GM12878 (cell line): ENCODE measurements at regions of chr3 and their contacts with region 1.

Region 1: DNA sequence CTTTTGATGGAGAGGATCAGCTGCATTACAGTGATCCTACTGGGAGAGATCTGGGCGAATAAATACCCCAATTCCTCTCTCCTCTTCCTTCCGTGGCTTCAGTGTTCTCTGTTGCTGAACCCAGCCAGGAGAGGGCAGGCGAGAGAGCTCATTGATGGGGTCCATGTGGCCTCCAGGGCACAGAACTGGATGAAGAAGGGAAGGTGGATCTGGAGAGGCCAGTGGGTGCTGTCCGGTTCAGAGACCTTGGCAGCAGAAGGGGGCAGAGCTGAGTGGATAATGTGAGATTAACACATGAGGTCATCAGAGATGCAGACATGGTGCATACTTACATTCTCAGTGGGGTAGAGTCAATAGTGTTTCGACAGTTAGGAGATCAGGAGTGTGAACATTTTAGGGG is 193.6 kb downstream of the CLSTN2 start:
- DNase-seq: no peak
- ATAC-seq: peak; percentile 95
- H3K4me3 ChIP-seq: no peak overlapping the region
- H3K27ac ChIP-seq: no peak overlapping the region
- H3K4me1 ChIP-seq: no peaks in the 10 kb centered on the region
- H3K27me3 ChIP-seq: peaks cover 0 to 2% of the 10 kb centered on the region in 2 experiments; a peak in 2 of 4 replicates
- CTCF ChIP-seq: peak; percentile 71 to 84 (median 72)
- EP300 ChIP-seq: no peak
- POLR2A ChIP-seq: no peak
- RAD21 ChIP-seq: peak; percentile 85

Region 2: GRCh38 chr3:139944256-139944910 is 184.2 kb before region 1 on chr3:
- CTCF ChIA-PET with region 1: no interaction called
- POLR2A ChIA-PET with region 1: no interaction called
- RAD21 ChIA-PET with region 1: no interaction called
- SMC1A ChIA-PET with region 1: no interaction called
- in situ Hi-C with region 1: no loop called
- intact Hi-C with region 1: no loop called
- DNase-seq: no peak
- ATAC-seq: no peak
- H3K4me3 ChIP-seq: no peak overlapping the region
- H3K27ac ChIP-seq: no peak overlapping the region
- H3K4me1 ChIP-seq: no peaks in the 10 kb centered on the region
- H3K27me3 ChIP-seq: peaks cover 0 to 1% of the 10 kb centered on the region in 2 experiments; a peak in 1 of 4 replicates
- CTCF ChIP-seq: no peak
- EP300 ChIP-seq: no peak
- POLR2A ChIP-seq: no peak
- RAD21 ChIP-seq: no peak

Region 3: DNA sequence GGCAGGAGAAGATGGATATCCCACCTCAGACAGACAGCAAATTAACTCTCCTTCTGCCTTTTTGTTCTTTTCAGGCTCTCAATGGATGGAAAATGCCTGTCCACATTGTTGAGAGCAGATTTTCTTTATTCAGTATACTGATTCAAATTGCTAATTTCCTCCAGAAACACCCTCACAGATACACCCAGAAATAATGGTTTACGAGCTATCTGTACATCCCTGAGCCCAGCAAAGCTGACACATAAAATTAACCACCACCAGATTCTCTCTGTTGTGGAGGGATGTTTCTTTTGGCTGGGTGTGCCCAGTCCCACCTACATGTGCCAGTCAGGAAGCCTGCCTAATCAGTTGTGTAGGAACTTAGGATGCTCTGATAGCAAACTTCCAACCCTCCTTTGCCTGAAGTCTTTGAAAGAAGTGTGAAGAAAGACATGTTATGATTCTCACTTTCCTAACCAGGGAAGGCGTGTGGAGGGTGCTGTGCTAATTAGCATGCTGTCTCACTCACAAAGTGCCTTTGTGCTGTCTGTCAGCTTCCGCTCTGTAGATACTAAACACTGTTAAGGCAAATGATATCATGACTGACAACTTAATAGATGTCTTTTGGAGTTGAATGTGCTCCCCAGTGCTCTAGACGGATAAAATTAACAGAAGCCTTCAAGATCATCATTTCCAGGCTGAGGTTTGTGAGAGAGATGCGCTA is 14.9 kb after region 1 on chr3:
- CTCF ChIA-PET with region 1: interaction called, 15 read pairs
- POLR2A ChIA-PET with region 1: interaction called, 3 read pairs
- RAD21 ChIA-PET with region 1: no interaction called
- SMC1A ChIA-PET with region 1: interaction called, 6 read pairs
- in situ Hi-C with region 1: no loop called
- intact Hi-C with region 1: no loop called
- DNase-seq: no peak
- ATAC-seq: no peak
- H3K4me3 ChIP-seq: no peak overlapping the region
- H3K27ac ChIP-seq: no peak overlapping the region
- H3K4me1 ChIP-seq: no peaks in the 10 kb centered on the region
- H3K27me3 ChIP-seq: no peaks in the 10 kb centered on the region
- CTCF ChIP-seq: no peak
- EP300 ChIP-seq: no peak
- POLR2A ChIP-seq: no peak
- RAD21 ChIP-seq: no peak

Region 4: GRCh38 chr3:140170612-140171011 is 42.0 kb after region 1 on chr3:
- CTCF ChIA-PET with region 1: interaction called, 6 read pairs
- POLR2A ChIA-PET with region 1: no interaction called
- RAD21 ChIA-PET with region 1: interaction called, 4 read pairs
- SMC1A ChIA-PET with region 1: interaction called, 12 read pairs
- in situ Hi-C with region 1: no loop called
- intact Hi-C with region 1: no loop called
- DNase-seq: peak; percentile 97
- ATAC-seq: peak; percentile 99
- H3K4me3 ChIP-seq: no peak overlapping the region
- H3K27ac ChIP-seq: peak overlapping the region; percentile 55
- H3K4me1 ChIP-seq: peaks cover 11% of the 10 kb centered on the region
- H3K27me3 ChIP-seq: no peaks in the 10 kb centered on the region
- CTCF ChIP-seq: no peak
- EP300 ChIP-seq: no peak
- POLR2A ChIP-seq: no peak
- RAD21 ChIP-seq: no peak

Region 5: GRCh38 chr3:140198242-140198641 is 69.6 kb after region 1 on chr3:
- CTCF ChIA-PET with region 1: interaction called, 26 read pairs
- POLR2A ChIA-PET with region 1: no interaction called
- RAD21 ChIA-PET with region 1: no interaction called
- SMC1A ChIA-PET with region 1: interaction called, 10 read pairs
- in situ Hi-C with region 1: no loop called
- intact Hi-C with region 1: no loop called
- DNase-seq: no peak
- ATAC-seq: no peak
- H3K4me3 ChIP-seq: no peak overlapping the region
- H3K27ac ChIP-seq: no peak overlapping the region
- H3K4me1 ChIP-seq: no peaks in the 10 kb centered on the region
- H3K27me3 ChIP-seq: no peaks in the 10 kb centered on the region
- CTCF ChIP-seq: no peak
- EP300 ChIP-seq: no peak
- POLR2A ChIP-seq: no peak
- RAD21 ChIP-seq: no peak

Region 6: DNA sequence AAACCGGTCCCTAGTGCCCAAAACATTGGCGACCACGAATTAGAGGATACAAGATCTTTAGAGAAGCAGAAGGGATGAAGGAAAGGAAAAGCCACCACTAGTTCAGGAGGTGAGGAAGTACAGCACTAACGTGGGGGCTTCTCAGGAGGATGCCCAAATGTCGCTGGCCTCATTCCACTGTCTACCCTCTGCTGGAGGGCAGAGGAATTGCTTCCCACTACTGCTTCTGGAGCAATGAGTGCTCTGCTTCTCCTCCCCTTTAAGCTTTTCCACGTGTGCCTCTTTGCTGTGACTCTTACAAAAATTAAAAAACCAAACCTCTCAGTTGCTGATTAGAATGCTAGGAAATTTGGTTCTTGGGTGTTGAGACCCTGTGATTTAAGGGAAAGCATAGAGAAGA is 87.6 kb after region 1 on chr3:
- CTCF ChIA-PET with region 1: interaction called, 72 read pairs
- POLR2A ChIA-PET with region 1: no interaction called
- RAD21 ChIA-PET with region 1: interaction called, 41 read pairs
- SMC1A ChIA-PET with region 1: interaction called, 40 read pairs
- in situ Hi-C with region 1: loop called (anchors 5 kb)
- intact Hi-C with region 1: loop called (anchors 2 kb)
- DNase-seq: no peak
- ATAC-seq: peak; percentile 86
- H3K4me3 ChIP-seq: no peak overlapping the region
- H3K27ac ChIP-seq: no peak overlapping the region
- H3K4me1 ChIP-seq: no peaks in the 10 kb centered on the region
- H3K27me3 ChIP-seq: no peaks in the 10 kb centered on the region; a peak in 1 of 4 replicates
- CTCF ChIP-seq: peak; percentile 34 to 73 (median 65)
- EP300 ChIP-seq: no peak
- POLR2A ChIP-seq: no peak
- RAD21 ChIP-seq: peak; percentile 46

Region 7: DNA sequence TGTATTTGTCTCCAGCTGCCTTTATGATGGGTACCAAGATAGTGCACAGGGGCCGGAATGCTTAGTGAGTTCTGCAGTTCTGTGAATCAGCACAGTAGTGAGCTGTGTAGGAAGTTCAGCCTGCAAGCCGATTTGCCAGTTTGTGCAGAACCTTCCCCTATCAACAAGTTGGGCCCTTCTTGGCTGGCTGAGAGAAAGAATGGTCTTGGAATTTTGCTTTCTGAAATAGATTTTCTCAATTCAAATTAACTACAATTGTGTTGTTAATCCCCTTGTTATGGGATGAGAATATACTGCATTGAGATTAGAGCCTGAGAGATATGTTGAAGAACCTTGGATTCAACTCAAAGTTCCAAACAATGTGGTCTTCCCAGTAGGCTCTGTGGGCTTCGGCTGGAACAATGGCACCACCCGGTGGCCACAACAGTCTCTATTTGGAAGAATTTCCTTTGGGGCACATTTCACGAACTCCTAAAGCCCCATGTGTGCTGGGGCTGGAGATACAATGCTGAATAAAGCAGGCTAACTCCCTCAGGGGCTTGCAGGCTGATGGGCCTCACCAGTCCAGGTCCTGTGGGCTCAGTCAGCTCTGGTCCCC is 608.3 kb after region 1 on chr3:
- CTCF ChIA-PET with region 1: interaction called, 15 read pairs
- POLR2A ChIA-PET with region 1: no interaction called
- RAD21 ChIA-PET with region 1: interaction called, 5 read pairs
- SMC1A ChIA-PET with region 1: interaction called, 13 read pairs
- in situ Hi-C with region 1: loop called (anchors 25 kb)
- intact Hi-C with region 1: loop called (anchors 1 kb)
- DNase-seq: no peak
- ATAC-seq: peak; percentile 83
- H3K4me3 ChIP-seq: no peak overlapping the region
- H3K27ac ChIP-seq: no peak overlapping the region
- H3K4me1 ChIP-seq: no peaks in the 10 kb centered on the region
- H3K27me3 ChIP-seq: peaks cover 0 to 6% of the 10 kb centered on the region in 2 experiments; a peak in 2 of 4 replicates
- CTCF ChIP-seq: peak; percentile 33 to 67 (median 45); a peak in 4 of 6 replicates
- EP300 ChIP-seq: no peak
- POLR2A ChIP-seq: no peak
- RAD21 ChIP-seq: peak; percentile 64